AG04450 (cell line): ENCODE measurements at regions of chr18 and their contacts with region 1.

Region 1: DNA sequence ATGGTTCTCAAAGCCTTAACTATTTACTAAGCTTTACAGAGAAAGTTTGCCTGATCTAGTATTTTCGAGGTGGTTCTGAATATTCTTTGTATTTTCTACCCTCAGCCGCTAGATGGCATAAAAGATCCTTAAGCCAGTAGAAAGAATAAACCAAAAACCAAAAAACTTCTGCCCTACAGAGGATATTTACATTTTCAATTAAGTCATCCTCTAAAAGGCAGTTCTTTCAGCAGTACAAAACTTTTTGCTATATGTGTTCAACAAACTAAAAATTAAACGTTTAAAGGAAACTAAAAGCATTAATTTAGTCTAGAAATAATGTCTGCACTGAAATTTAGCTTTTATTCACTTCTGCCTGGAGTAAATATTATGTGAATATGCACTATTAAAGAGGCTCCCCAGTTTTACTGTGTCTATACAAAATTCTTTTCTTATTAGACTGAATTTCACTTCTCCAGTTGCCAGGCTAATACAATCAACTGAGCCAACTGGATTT is 297.5 kb downstream of the PIEZO2 start:
- DNase-seq: peak; percentile 33
- H3K4me3 ChIP-seq: no peak overlapping the region
- H3K27ac ChIP-seq: no peak overlapping the region
- H3K27me3 ChIP-seq: peaks cover 24% of the 10 kb centered on the region
- CTCF ChIP-seq: peak; percentile 82

Region 2: GRCh38 chr18:10841203-10841602 is 10.7 kb before region 1 on chr18:
- CTCF ChIA-PET with region 1: interaction called, 34 read pairs
- POLR2A ChIA-PET with region 1: no interaction called
- DNase-seq: no peak
- H3K4me3 ChIP-seq: no peak overlapping the region
- H3K27ac ChIP-seq: no peak overlapping the region
- H3K27me3 ChIP-seq: peaks cover 4% of the 10 kb centered on the region
- CTCF ChIP-seq: no peak

Region 3: GRCh38 chr18:11052800-11053199 is 200.9 kb after region 1 on chr18:
- CTCF ChIA-PET with region 1: interaction called, 10 read pairs
- POLR2A ChIA-PET with region 1: no interaction called
- DNase-seq: no peak
- H3K4me3 ChIP-seq: no peak overlapping the region
- H3K27ac ChIP-seq: no peak overlapping the region
- H3K27me3 ChIP-seq: peaks cover 2% of the 10 kb centered on the region
- CTCF ChIP-seq: no peak

Region 4: GRCh38 chr18:11163665-11164064 is 311.8 kb after region 1 on chr18:
- CTCF ChIA-PET with region 1: interaction called, 185 read pairs
- POLR2A ChIA-PET with region 1: no interaction called
- DNase-seq: no peak
- H3K4me3 ChIP-seq: no peak overlapping the region
- H3K27ac ChIP-seq: no peak overlapping the region
- H3K27me3 ChIP-seq: no peaks in the 10 kb centered on the region
- CTCF ChIP-seq: peak; percentile 67